Activated CD4-positive, alpha-beta memory T cell treated with anti-CD3 and anti-CD28 coated beads for 36 hours (primary cell): ENCODE measurements at regions of chr5 and their contacts with region 1.

Region 1: GRCh38 chr5:14727428-14727865 is 62.9 kb downstream of the OTULIN start:
- DNase-seq: peak; percentile 82
- H3K4me3 Mint-ChIP-seq: no peak overlapping the region
- H3K27ac Mint-ChIP-seq: no peak overlapping the region
- H3K4me1 Mint-ChIP-seq: peaks cover 22% of the 10 kb centered on the region
- H3K27me3 Mint-ChIP-seq: no peaks in the 10 kb centered on the region

Region 2: DNA sequence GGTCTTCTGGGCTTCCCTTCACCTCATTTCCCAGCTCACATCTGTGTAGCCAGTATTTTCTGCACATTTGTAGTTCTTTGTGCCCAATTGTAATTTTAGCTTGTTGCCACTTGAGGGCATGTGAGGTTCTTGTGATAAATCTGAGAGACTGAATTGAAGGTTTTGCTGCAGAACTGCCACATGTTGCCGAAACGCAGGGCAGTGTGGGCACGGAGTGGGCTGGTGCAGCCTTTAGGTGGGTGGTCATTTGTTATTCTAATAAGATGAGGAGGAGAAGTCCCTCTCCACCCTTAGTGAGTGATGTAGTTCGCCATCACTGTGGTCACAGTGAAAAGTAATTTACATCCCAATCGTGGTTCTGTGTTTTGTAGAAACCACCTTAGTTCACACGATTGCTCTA is 41.7 kb before region 1 on chr5:
- CTCF ChIA-PET with region 1: interaction called, 20 read pairs
- POLR2A ChIA-PET with region 1: no interaction called
- intact Hi-C with region 1: loop called (anchors 1 kb)
- DNase-seq: peak; percentile 71
- H3K4me3 Mint-ChIP-seq: no peak overlapping the region
- H3K27ac Mint-ChIP-seq: peak overlapping the region; percentile 59
- H3K4me1 Mint-ChIP-seq: peaks cover 15% of the 10 kb centered on the region
- H3K27me3 Mint-ChIP-seq: no peaks in the 10 kb centered on the region

Region 3: DNA sequence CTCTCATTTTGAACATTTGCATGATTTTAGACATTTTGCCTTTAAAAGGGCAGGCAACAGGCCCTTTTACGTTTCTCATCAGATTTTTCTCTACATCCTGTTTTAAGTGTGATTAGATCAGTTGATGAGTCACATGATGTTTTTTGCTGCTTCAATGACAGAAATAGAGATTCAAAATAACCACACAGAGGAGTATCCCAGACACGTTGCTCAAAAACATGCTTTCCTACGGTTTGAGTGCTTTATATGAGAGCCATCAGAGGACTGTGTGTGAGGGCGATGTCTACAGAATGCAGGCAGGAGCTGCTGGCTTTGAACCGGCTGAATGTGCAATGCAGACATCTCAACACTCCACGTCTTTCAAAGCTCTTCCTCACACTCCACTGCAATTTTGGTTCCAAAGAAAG is 20.8 kb before region 1 on chr5:
- CTCF ChIA-PET with region 1: interaction called, 33 read pairs
- POLR2A ChIA-PET with region 1: no interaction called
- intact Hi-C with region 1: loop called (anchors 2 kb)
- DNase-seq: peak; percentile 56
- H3K4me3 Mint-ChIP-seq: peak overlapping the region; percentile 57
- H3K27ac Mint-ChIP-seq: peak overlapping the region; percentile 94
- H3K4me1 Mint-ChIP-seq: peaks cover 74% of the 10 kb centered on the region
- H3K27me3 Mint-ChIP-seq: no peaks in the 10 kb centered on the region

Region 4: DNA sequence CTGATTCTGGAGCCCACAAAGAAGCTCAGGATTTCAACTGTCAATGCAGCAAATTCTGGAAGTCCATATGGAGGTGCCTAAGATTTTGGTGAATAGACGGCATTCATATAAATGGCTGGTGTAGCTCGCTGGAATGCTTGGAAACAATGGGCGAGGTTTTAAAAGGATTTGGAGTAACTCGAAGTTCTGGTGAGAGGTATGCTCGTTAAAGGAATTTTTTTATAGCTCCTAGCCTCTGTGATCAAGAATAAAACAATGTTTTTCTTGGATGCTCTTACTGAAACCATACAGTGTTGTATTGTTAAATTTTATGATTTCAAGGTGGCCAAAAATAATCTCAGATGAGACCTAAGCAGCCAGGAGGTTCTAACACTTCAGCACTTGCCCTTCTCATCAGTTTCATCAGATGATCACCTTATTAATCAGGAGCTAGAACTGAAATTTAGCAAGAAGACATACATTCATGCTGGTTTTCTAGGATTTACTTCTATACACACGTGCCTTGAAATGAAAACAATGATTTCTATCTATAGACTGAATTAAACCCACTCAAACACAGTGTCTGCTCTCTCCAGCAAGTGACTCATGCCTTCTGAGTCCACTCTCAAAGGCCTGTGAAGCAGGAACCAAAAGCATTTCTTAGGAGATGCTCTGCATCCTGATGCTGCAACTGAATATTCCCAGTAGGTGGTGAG is 16.3 kb after region 1 on chr5:
- CTCF ChIA-PET with region 1: interaction called, 11 read pairs
- POLR2A ChIA-PET with region 1: no interaction called
- intact Hi-C with region 1: no loop called
- DNase-seq: no peak
- H3K4me3 Mint-ChIP-seq: no peak overlapping the region
- H3K27ac Mint-ChIP-seq: no peak overlapping the region
- H3K4me1 Mint-ChIP-seq: no peaks in the 10 kb centered on the region
- H3K27me3 Mint-ChIP-seq: no peaks in the 10 kb centered on the region

Region 5: DNA sequence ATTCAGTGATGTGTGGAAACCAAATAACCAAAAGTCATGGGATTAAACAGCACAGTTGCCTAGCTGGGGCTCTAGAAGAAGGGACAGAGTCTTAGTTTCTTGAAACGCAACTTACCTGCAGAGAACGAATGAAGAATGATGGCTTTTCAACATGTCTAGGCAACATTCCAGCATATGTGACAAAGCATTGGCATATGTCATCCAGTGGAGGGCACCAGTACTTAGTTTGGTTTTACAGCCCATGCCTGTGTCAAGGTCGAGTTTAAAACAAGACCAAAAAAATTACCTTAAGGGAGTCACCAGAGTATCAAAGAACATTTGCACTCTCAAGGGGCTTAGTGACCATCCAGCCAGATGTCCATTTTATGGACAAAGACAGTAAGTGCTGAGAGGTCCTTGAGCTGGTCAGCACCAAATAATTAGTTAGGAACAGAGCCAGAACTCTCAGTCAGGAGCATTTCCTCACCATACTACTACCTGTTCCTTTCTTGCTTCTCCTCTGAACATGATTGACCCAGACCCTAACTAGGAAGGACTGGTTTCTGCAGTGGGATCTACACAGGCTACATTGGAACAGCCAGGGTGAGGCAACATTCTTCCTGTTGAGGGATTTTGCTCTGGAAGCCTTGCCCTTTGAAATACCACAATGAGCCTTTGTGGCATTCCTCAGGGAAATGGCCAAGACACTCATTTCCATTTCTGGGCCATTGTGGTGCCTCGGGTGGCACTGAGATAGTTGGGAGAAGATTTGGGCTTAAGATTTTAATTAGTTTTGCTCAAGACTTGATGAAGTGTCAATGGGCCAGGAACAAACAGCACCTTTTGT is 219.6 kb after region 1 on chr5:
- CTCF ChIA-PET with region 1: interaction called, 3 read pairs
- POLR2A ChIA-PET with region 1: no interaction called
- intact Hi-C with region 1: loop called (anchors 1 kb)
- DNase-seq: peak; percentile 42
- H3K4me3 Mint-ChIP-seq: no peak overlapping the region
- H3K27ac Mint-ChIP-seq: peak overlapping the region; percentile 26
- H3K4me1 Mint-ChIP-seq: peaks cover 15% of the 10 kb centered on the region
- H3K27me3 Mint-ChIP-seq: peaks cover 7% of the 10 kb centered on the region

Region 6: GRCh38 chr5:15003511-15003920 is 276.1 kb after region 1 on chr5:
- CTCF ChIA-PET with region 1: interaction called, 171 read pairs
- POLR2A ChIA-PET with region 1: interaction called, 3 read pairs
- intact Hi-C with region 1: loop called (anchors 1 kb)
- DNase-seq: peak; percentile 68
- H3K4me3 Mint-ChIP-seq: no peak overlapping the region
- H3K27ac Mint-ChIP-seq: no peak overlapping the region
- H3K4me1 Mint-ChIP-seq: peaks cover 6% of the 10 kb centered on the region
- H3K27me3 Mint-ChIP-seq: peaks cover 2% of the 10 kb centered on the region

Region 7: GRCh38 chr5:15013654-15014463 is 286.4 kb after region 1 on chr5:
- CTCF ChIA-PET with region 1: interaction called, 17 read pairs
- POLR2A ChIA-PET with region 1: no interaction called
- intact Hi-C with region 1: loop called (anchors 1 kb)
- DNase-seq: no peak
- H3K4me3 Mint-ChIP-seq: no peak overlapping the region
- H3K27ac Mint-ChIP-seq: no peak overlapping the region
- H3K4me1 Mint-ChIP-seq: no peaks in the 10 kb centered on the region
- H3K27me3 Mint-ChIP-seq: no peaks in the 10 kb centered on the region

Region 8: DNA sequence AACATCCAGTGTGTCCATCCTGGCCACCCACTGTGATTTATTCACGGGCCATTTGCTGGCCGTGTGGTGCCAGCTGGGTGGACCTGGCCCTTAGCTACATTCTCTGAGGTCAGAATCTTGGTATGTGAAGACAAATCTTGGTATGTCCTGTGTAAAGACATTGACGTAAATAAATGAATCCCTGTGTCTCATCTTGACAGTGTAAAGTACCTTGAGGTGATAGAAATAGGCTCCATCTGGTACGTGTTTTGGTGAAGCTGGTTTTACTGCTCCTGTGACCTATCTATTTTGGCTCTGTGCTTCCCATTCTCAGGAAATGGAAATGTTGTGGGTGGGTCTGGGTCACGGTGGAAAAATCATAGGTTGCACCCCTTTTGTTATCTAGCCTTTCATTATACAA is 389.5 kb after region 1 on chr5:
- CTCF ChIA-PET with region 1: no interaction called
- POLR2A ChIA-PET with region 1: no interaction called
- intact Hi-C with region 1: no loop called
- DNase-seq: no peak
- H3K4me3 Mint-ChIP-seq: no peak overlapping the region
- H3K27ac Mint-ChIP-seq: no peak overlapping the region
- H3K4me1 Mint-ChIP-seq: no peaks in the 10 kb centered on the region
- H3K27me3 Mint-ChIP-seq: peaks cover 1% of the 10 kb centered on the region